A549 (cell line): ENCODE measurements at regions of chr7 and their contacts with region 1.

Region 1: DNA sequence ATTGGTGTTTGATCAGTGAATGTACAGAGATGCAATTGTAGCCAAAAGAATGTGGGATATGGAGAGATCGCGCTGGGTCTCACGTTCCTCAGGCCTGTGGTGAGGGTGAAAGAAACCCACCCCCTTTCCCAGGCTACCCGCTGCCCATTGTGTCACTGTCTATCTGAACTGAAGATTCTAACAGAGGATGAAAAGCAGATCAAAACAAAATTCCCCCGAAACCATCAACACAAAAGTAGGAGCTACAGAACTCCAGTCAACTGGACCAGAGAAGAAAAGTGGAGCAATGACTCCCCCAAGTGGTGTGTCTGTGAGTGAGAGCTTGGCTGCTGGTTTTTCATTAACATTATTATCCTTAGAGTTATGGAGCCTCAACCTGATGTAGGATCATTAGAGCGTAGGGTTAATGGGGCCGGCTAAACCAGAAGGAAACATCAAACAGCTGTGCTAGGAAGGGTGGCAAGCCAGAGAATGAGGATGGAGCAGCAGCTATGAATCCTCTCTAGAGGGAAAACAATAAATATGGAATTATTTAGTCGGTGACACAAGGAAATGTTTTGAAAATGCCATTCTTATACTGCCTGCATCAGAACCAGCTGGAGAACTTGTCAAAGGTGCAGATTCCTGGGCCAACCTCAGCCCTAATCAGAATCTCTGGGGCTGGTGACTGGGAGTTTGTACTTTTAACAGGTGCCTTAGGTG is 38.3 kb downstream of the AKR1B1 start:
- DNase-seq: peak; percentile 88 to 92
- ATAC-seq: peak; percentile 78 to 86
- H3K4me3 ChIP-seq: no peak overlapping the region
- H3K27ac ChIP-seq: peak overlapping the region; percentile 79 to 87
- H3K4me1 ChIP-seq: peaks cover 64% of the 10 kb centered on the region
- CTCF ChIP-seq: peak; percentile 99
- EP300 ChIP-seq: no peak
- POLR2A ChIP-seq: no peak
- RAD21 ChIP-seq: peak; percentile 99 to 100

Region 2: DNA sequence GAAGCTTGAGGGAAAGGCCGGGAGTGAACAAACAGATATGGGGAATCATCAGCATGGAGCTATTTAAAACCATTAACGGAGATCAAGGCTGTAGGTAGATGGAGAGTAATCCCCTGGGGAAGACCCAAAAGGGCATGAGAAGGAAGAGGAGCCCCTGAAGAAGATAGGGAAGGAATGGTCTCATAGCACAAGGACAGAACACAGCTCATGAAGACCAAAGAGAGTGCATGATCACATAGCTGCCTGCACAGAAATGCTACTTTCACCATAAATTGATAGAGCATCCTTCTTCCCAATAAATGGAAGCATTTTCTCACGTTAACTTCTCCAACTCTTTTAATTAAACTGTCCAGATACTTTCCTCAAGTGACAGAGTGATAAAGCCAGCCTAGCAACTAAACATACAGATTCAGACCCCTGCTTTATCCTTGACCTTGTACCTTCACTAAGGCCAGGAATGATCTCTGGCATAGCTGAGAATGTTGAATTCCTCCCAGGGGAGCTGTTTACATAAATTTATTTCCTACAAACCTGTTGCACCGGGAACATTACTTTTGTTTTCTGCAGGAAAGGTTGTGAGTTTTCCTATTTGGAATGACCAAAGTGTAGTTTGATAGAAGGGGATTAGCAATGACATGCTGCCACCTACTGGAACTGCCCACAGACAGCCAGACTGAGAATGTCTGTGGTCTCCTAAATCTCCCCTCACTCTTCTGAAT is 404.2 kb before region 1 on chr7:
- CTCF ChIA-PET with region 1: interaction called, 11 read pairs
- POLR2A ChIA-PET with region 1: no interaction called
- DNase-seq: peak; percentile 57 to 65
- ATAC-seq: peak; percentile 88 to 96
- H3K4me3 ChIP-seq: no peak overlapping the region
- H3K27ac ChIP-seq: no peak overlapping the region
- H3K4me1 ChIP-seq: peaks cover 7% of the 10 kb centered on the region; the same call in 1 of the 3 replicates
- CTCF ChIP-seq: peak; percentile 98
- EP300 ChIP-seq: no peak
- POLR2A ChIP-seq: no peak
- RAD21 ChIP-seq: peak; percentile 95 to 96

Region 3: GRCh38 chr7:134154581-134155130 is 265.9 kb before region 1 on chr7:
- CTCF ChIA-PET with region 1: interaction called, 11 read pairs
- POLR2A ChIA-PET with region 1: no interaction called
- DNase-seq: no peak
- ATAC-seq: 0 out of 6 replicates have a peak, but pooled peaks of 1 of the 2 experiments have one; percentile 34
- H3K4me3 ChIP-seq: no peak overlapping the region
- H3K27ac ChIP-seq: no peak overlapping the region
- H3K4me1 ChIP-seq: no peaks in the 10 kb centered on the region; the same call in 2 of the 3 replicates
- CTCF ChIP-seq: no peak
- EP300 ChIP-seq: no peak
- POLR2A ChIP-seq: no peak
- RAD21 ChIP-seq: no peak

Region 4: DNA sequence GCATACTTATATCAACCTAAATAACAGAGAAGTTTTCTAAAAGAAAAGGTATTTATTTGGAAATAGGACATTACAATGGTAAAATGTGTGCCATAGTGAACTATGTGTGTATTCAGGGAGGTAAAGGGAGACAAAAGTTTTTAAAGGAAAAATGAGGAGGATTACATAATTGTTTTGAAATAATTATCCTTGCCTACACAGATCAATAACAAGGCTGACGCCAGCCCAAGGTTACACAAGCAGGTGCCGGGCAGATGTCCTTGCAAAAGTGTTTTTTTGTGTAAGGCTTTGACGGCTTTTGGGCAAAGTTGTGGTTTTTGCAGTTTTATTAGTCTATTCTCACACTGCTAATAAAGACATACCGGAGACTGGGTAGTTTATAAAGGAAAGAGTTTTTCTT is 81.1 kb before region 1 on chr7:
- CTCF ChIA-PET with region 1: interaction called, 17 read pairs
- POLR2A ChIA-PET with region 1: no interaction called
- DNase-seq: no peak
- ATAC-seq: no peak
- H3K4me3 ChIP-seq: no peak overlapping the region
- H3K27ac ChIP-seq: no peak overlapping the region
- H3K4me1 ChIP-seq: no peaks in the 10 kb centered on the region
- CTCF ChIP-seq: no peak
- EP300 ChIP-seq: no peak
- POLR2A ChIP-seq: no peak
- RAD21 ChIP-seq: no peak

Region 5: DNA sequence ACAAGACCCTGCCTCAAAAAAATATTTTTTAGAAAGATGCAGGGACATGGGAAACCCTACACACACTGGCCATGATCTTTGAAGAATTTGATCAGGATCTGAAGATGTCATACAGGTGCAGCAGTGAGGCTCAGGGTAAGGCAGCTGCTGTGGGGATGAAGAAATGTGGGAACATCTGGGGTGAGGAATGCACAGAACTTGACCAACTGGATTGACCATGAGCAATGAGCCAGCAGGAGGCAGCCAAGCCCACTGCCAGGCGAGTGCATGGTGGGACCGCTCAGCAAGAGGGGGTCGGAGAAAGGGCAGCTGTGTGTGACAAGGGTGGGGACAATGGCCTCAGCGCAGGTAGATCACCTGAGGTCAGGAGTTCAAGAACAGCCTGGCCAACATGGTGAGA is 16.9 kb before region 1 on chr7:
- CTCF ChIA-PET with region 1: interaction called, 21 read pairs
- POLR2A ChIA-PET with region 1: no interaction called
- DNase-seq: no peak
- ATAC-seq: no peak
- H3K4me3 ChIP-seq: no peak overlapping the region
- H3K27ac ChIP-seq: no peak overlapping the region
- H3K4me1 ChIP-seq: no peaks in the 10 kb centered on the region
- CTCF ChIP-seq: no peak
- EP300 ChIP-seq: no peak
- POLR2A ChIP-seq: no peak
- RAD21 ChIP-seq: no peak

Region 6: GRCh38 chr7:134509010-134509409 is 88.4 kb after region 1 on chr7:
- CTCF ChIA-PET with region 1: interaction called, 566 read pairs
- POLR2A ChIA-PET with region 1: no interaction called
- DNase-seq: no peak
- ATAC-seq: no peak
- H3K4me3 ChIP-seq: no peak overlapping the region
- H3K27ac ChIP-seq: 0 out of 6 replicates have a peak overlapping the region, but pooled peaks of 1 of the 2 experiments have one; percentile 6
- H3K4me1 ChIP-seq: peaks cover 17% of the 10 kb centered on the region
- CTCF ChIP-seq: no peak
- EP300 ChIP-seq: no peak
- POLR2A ChIP-seq: no peak
- RAD21 ChIP-seq: no peak

Region 7: GRCh38 chr7:134667899-134668298 is 247.3 kb after region 1 on chr7:
- CTCF ChIA-PET with region 1: no interaction called
- POLR2A ChIA-PET with region 1: no interaction called
- DNase-seq: no peak
- ATAC-seq: no peak
- H3K4me3 ChIP-seq: no peak overlapping the region
- H3K27ac ChIP-seq: no peak overlapping the region
- H3K4me1 ChIP-seq: peaks cover 16% of the 10 kb centered on the region
- CTCF ChIP-seq: no peak
- EP300 ChIP-seq: no peak
- POLR2A ChIP-seq: no peak
- RAD21 ChIP-seq: no peak